A549 (cell line): ENCODE measurements at regions of chr7 and their contacts with region 1.

Region 1: DNA sequence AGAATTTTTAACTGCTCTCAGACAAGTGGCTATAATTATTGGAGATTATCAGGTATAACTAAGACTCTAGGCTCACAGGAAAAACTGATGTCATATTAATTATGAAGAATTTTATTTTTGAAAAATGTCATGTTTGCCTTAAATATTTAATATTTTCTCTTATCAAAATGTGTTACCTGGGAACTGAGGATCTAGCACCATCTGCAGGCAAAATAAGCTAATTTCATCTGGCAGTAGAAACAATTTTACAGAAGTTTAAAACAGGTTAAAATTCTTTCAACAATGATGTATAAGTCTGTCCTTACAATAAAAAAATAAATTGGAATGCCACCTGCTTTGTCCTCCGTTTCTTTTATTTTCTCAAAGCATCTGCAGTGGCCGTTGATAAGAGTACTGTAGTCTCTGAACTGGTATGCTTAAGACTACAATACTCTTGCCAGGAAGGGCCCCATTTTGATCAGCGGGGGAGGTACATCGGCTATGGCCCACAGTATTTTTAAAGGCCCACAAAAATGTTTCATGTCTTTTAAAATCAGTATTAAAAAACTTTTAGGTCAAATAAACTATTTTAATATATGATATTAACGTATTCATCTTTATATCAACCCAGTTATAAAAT is 81.3 kb downstream of the VWDE start:
- DNase-seq: peak in 1 of 2 experiments; percentile 36
- ATAC-seq: peak in 1 of 2 experiments; percentile 42; a peak in 1 of 6 replicates
- H3K4me3 ChIP-seq: no peak overlapping the region
- H3K27ac ChIP-seq: no peak overlapping the region; a peak in 1 of 6 replicates
- H3K4me1 ChIP-seq: peaks cover 24% of the 10 kb centered on the region; the same call in 2 of the 3 replicates
- CTCF ChIP-seq: peak; percentile 91
- EP300 ChIP-seq: no peak
- POLR2A ChIP-seq: no peak
- RAD21 ChIP-seq: peak; percentile 88 to 93

Region 2: GRCh38 chr7:12066521-12066920 is 255.9 kb before region 1 on chr7:
- CTCF ChIA-PET with region 1: interaction called, 11 read pairs
- POLR2A ChIA-PET with region 1: no interaction called
- DNase-seq: peak in 1 of 2 experiments; percentile 45
- ATAC-seq: peak; percentile 70 to 86
- H3K4me3 ChIP-seq: no peak overlapping the region
- H3K27ac ChIP-seq: peak overlapping the region; percentile 24 to 56; a peak in 3 of 6 replicates
- H3K4me1 ChIP-seq: peaks cover 17% of the 10 kb centered on the region
- CTCF ChIP-seq: no peak
- EP300 ChIP-seq: no peak
- POLR2A ChIP-seq: no peak
- RAD21 ChIP-seq: no peak

Region 3: DNA sequence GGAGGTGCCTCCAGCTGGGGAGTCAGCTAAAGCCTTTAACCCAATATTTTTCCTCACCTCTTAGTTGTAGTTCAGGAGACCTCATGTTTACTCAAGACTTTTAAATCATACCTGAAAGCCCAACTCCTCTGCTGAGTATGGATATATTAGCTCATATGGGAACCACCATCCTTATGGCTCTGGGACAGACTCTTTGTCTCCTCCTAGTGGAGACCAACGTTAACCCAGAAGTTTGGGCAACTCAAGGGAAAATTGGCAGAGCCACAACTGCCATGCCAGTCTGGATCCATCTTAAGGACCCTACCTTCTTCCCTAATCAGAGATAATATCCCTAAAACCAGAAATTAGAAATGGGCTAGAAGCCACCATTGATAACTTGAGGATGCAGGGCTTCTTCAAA is 30.5 kb before region 1 on chr7:
- CTCF ChIA-PET with region 1: no interaction called
- POLR2A ChIA-PET with region 1: no interaction called
- DNase-seq: peak in 1 of 2 experiments; percentile 18
- ATAC-seq: peak in 1 of 2 experiments; percentile 44; a peak in 2 of 6 replicates
- H3K4me3 ChIP-seq: no peak overlapping the region
- H3K27ac ChIP-seq: no peak overlapping the region
- H3K4me1 ChIP-seq: no peaks in the 10 kb centered on the region
- CTCF ChIP-seq: peak; percentile 3; the same call in 2 of the 3 replicates
- EP300 ChIP-seq: no peak
- POLR2A ChIP-seq: no peak
- RAD21 ChIP-seq: peak in 1 of 2 experiments; percentile 38; a peak in 2 of 5 replicates